Breast epithelium (tissue), 4 donors: ENCODE measurements at regions of chr2 and their contacts with region 1.

Region 1: DNA sequence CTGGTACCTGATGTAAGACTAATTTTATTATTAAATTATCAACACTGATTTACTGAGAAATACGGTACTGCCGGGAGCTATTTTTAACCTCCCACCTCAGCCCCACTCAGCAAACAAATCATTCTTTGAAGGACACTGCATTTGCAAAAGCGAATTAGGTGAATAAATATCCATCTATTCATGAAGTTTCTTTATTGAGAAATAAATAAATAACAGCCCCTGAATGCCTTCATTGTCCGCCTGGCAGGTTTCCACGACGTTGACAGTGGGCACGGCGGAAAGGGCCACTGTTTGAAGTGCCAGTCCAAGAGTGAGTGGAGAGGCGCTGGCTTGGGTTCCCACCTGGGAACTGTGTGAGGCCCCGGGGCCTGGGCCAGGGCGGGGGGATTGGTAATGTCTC is 15.7 kb downstream of the C1QL2 start:
- DNase-seq: no peak
- H3K4me3 ChIP-seq: no peak overlapping the region
- H3K27ac ChIP-seq: no peak overlapping the region
- H3K4me1 ChIP-seq: no peaks in the 10 kb centered on the region
- H3K27me3 ChIP-seq: peaks cover 0 to 20% of the 10 kb centered on the region in 2 donors
- CTCF ChIP-seq: no peak
- POLR2A ChIP-seq: no peak

Region 2: GRCh38 chr2:119184512-119184911 is 41.7 kb after region 1 on chr2:
- intact Hi-C with region 1: loop called (anchors 1 kb)
- DNase-seq: no peak
- H3K4me3 ChIP-seq: no peak overlapping the region
- H3K27ac ChIP-seq: no peak overlapping the region
- H3K4me1 ChIP-seq: no peaks in the 10 kb centered on the region
- H3K27me3 ChIP-seq: no peaks in the 10 kb centered on the region
- CTCF ChIP-seq: no peak
- POLR2A ChIP-seq: no peak